Psoas muscle (tissue), 8 donors: ENCODE measurements at regions of chr4 and their contacts with region 1.

Region 1: GRCh38 chr4:6732441-6733357 is 16.7 kb downstream of the BLOC1S4 start:
- DNase-seq: peak; percentile 82 to 87
- ATAC-seq: peak; percentile 92 to 95 (median 95)
- H3K4me3 ChIP-seq: no peak overlapping the region
- H3K27ac ChIP-seq: peak overlapping the region; percentile 69
- H3K4me1 ChIP-seq: peaks cover 12% of the 10 kb centered on the region
- H3K27me3 ChIP-seq: no peaks in the 10 kb centered on the region
- CTCF ChIP-seq: no peak

Region 2: GRCh38 chr4:5730993-5731990 is 1001.4 kb before region 1 on chr4:
- intact Hi-C with region 1: no loop called
- DNase-seq: peak in 1 of 2 donors; percentile 45
- ATAC-seq: no peak
- H3K4me3 ChIP-seq: no peak overlapping the region
- H3K27ac ChIP-seq: no peak overlapping the region
- H3K4me1 ChIP-seq: no peaks in the 10 kb centered on the region
- H3K27me3 ChIP-seq: no peaks in the 10 kb centered on the region
- CTCF ChIP-seq: no peak

Region 3: GRCh38 chr4:6768539-6768905 is 35.8 kb after region 1 on chr4:
- intact Hi-C with region 1: loop called (anchors 5 kb)
- DNase-seq: peak; percentile 43 to 56
- ATAC-seq: peak; percentile 60 to 74 (median 70)
- H3K4me3 ChIP-seq: peak overlapping the region; percentile 27
- H3K27ac ChIP-seq: peak overlapping the region; percentile 89
- H3K4me1 ChIP-seq: peaks cover 55% of the 10 kb centered on the region
- H3K27me3 ChIP-seq: no peaks in the 10 kb centered on the region
- CTCF ChIP-seq: no peak